Naive thymus-derived CD4-positive, alpha-beta T cell (primary cell): ENCODE measurements at regions of chr3 and their contacts with region 1.

Region 1: DNA sequence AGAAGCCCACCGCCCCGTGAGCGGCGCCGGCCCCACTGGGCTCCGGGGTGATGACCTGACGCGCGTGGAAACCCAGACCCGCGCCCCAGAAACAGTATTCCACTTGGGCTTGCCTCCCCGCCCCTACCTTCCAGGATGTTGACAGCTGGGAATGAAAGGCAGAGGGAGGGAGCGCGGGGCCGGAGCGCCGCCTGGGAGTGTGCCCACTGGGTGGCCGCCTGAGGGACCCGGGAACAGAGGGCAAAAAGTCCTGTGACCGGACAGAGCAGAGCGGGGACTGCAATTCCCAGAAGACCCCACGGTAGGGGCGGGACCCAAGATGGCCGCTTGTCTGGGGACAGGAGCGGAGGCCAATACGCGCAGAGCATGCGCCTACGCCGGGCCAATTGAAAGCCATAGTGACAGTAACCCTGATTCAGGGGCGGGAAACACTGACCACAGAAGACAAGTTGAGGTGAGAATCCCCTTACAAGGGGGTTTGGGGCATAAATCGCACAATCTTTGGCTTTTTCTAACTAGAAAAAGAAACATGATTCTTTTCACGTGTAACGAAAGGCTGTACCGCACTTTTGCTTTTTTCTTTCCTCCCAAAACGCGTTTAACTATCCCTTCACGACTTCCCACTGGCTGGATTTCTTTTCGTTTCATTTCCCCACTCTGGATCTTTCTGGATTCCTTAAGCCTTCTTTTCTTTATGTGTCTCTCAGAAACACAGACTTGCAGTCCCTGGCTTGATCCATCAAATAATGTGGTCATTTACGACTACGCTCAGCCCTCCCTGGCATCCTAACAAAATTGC is at the start of gene FHIT:
- DNase-seq: peak; percentile 73 to 89 (median 87)
- ATAC-seq: peak; percentile 96
- H3K4me3 ChIP-seq: peak within 1 kb of the TSS; percentile 83
- H3K4me3 Mint-ChIP-seq: peak within 1 kb of the TSS; percentile 83 to 94 (median 92)
- H3K27ac ChIP-seq: peak within 1 kb of the TSS; percentile 80
- H3K27ac Mint-ChIP-seq: peak within 1 kb of the TSS; percentile 74 to 95 (median 84)
- H3K4me1 ChIP-seq: peaks cover 11 to 13% of the 10 kb centered on the region in 2 donors
- H3K4me1 Mint-ChIP-seq: peaks cover 10 to 27% (median 25%) of the 10 kb centered on the region in 7 donors
- H3K27me3 ChIP-seq: no peaks in the 10 kb centered on the region
- H3K27me3 Mint-ChIP-seq: peaks cover 0 to 12% (median 1%) of the 10 kb centered on the region in 5 donors
- total RNA-seq, gene FHIT: 53.4 to 230 (median 191) TPM

Region 2: DNA sequence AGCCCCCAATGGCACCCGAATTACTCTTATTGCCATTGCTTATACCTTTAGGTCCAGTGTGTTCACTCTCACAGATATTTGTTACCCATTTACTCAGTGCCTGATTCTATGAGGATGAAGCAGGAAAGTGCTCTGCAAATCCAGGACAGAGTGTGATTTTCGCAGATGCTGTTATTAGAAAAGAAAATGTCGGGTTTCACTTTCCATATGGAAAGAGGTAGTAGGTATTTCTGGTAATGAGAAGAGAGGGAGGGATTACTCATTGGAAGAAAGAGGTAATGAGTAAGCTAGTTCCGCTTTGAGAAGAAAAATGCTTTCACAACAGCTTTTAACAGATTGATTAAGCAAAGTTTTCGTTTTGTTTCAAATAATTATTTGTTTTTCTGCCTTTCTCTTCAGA is 1865.2 kb before region 1 on chr3:
- CTCF ChIA-PET with region 1: no interaction called
- POLR2A ChIA-PET with region 1: no interaction called
- intact Hi-C with region 1: loop called in 1 of 2 experiments (anchors 10 kb)
- DNase-seq: no peak
- ATAC-seq: peak; percentile 60
- H3K4me3 ChIP-seq: no peak overlapping the region
- H3K4me3 Mint-ChIP-seq: peak overlapping the region in 2 of 10 donors; percentile 4 to 58
- H3K27ac ChIP-seq: no peak overlapping the region
- H3K27ac Mint-ChIP-seq: peak overlapping the region in 1 of 9 donors; percentile 88
- H3K4me1 ChIP-seq: no peaks in the 10 kb centered on the region
- H3K4me1 Mint-ChIP-seq: peaks cover 3 to 80% (median 38%) of the 10 kb centered on the region in 7 donors
- H3K27me3 ChIP-seq: no peaks in the 10 kb centered on the region
- H3K27me3 Mint-ChIP-seq: no peaks in the 10 kb centered on the region

Region 3: GRCh38 chr3:61637088-61638051 is 386.0 kb after region 1 on chr3:
- CTCF ChIA-PET with region 1: no interaction called
- POLR2A ChIA-PET with region 1: no interaction called
- intact Hi-C with region 1: no loop called
- DNase-seq: no peak
- ATAC-seq: no peak
- H3K4me3 ChIP-seq: no peak overlapping the region
- H3K4me3 Mint-ChIP-seq: no peak overlapping the region
- H3K27ac ChIP-seq: no peak overlapping the region
- H3K27ac Mint-ChIP-seq: no peak overlapping the region
- H3K4me1 ChIP-seq: no peaks in the 10 kb centered on the region
- H3K4me1 Mint-ChIP-seq: no peaks in the 10 kb centered on the region
- H3K27me3 ChIP-seq: no peaks in the 10 kb centered on the region
- H3K27me3 Mint-ChIP-seq: peaks cover 0 to 21% (median 3%) of the 10 kb centered on the region in 5 donors